Left cardiac atrium (tissue), 4 donors: ENCODE measurements at regions of chr6 and their contacts with region 1.

Region 1: GRCh38 chr6:1596088-1596852 is 13.4 kb upstream of the FOXC1 start:
- DNase-seq: no peak
- ATAC-seq: peak; percentile 82 to 87

Region 2: DNA sequence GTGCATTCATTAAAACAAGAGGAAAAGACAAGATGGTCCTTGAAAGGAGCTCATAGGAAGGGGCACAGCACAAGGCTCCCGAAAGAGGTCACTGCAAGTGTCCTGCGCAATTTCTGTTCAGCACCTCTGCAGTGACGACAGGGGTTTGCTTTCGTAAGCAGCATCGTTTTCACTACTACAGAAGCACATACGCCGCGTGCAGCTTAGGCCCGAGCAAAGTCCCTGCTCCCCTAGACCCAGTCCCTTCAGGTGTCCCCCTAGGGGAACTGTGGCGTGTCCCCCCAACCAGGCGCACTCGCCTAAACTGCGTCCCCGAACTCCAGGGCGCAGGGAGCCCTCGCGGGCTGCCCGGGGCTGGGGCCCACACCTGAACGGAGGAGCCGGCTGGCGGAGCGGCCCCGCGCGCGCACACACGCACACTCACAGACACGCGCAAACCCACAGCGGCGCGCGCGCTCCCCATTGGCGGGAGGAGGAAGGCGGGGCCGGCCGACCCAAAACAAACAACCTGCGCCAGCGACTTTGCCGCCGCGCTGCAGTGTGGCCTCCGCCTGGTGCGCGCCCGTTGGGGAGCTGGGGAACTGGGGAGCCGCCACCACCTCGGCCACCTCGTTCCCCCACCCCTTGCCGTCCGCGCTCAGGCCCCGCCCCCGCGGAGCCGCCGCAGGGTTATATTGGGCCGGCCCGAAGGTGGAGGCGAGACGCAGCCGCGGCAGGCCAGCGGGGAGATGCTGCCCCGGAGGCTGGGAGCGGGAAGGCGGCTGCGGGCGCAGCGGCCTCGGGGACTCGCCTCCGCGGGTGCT is 284.7 kb before region 1 on chr6 and contains the start of gene FOXQ1:
- intact Hi-C with region 1: no loop called
- DNase-seq: no peak
- ATAC-seq: peak; percentile 60 to 65
- total RNA-seq, gene FOXQ1: not detected

Region 3: GRCh38 chr6:2353412-2354137 is 757.3 kb after region 1 on chr6:
- intact Hi-C with region 1: loop called (anchors 2 to 5 kb)
- DNase-seq: peak; percentile 71
- ATAC-seq: peak; percentile 76 to 87

Region 4: GRCh38 chr6:2749969-2750600 is 1153.8 kb after region 1 on chr6:
- intact Hi-C with region 1: loop called (anchors 5 to 10 kb)
- DNase-seq: no peak
- ATAC-seq: peak; percentile 47 to 61